ENCODE measurements at regions of chr17 and their contacts with region 1.

Region 1: GRCh38 chr17:14300575-14301278 is at the start of gene HS3ST3B1:
- DNase-seq: peak; percentile 100
- H3K4me3 Mint-ChIP-seq: peak within 1 kb of the TSS; percentile 89
- H3K27ac Mint-ChIP-seq: peak within 1 kb of the TSS; percentile 95
- H3K4me1 Mint-ChIP-seq: peaks cover 38% of the 10 kb centered on the region
- H3K27me3 Mint-ChIP-seq: peaks cover 30% of the 10 kb centered on the region
- total RNA-seq, gene HS3ST3B1: 23.2 to 26.0 TPM

Region 2: GRCh38 chr17:13031718-13032350 is 1268.9 kb before region 1 on chr17:
- CTCF ChIA-PET with region 1: no interaction called
- intact Hi-C with region 1: loop called (anchors 5 kb)
- DNase-seq: peak; percentile 63
- H3K4me3 Mint-ChIP-seq: no peak overlapping the region
- H3K27ac Mint-ChIP-seq: no peak overlapping the region
- H3K4me1 Mint-ChIP-seq: peaks cover 11% of the 10 kb centered on the region
- H3K27me3 Mint-ChIP-seq: no peaks in the 10 kb centered on the region

Region 3: DNA sequence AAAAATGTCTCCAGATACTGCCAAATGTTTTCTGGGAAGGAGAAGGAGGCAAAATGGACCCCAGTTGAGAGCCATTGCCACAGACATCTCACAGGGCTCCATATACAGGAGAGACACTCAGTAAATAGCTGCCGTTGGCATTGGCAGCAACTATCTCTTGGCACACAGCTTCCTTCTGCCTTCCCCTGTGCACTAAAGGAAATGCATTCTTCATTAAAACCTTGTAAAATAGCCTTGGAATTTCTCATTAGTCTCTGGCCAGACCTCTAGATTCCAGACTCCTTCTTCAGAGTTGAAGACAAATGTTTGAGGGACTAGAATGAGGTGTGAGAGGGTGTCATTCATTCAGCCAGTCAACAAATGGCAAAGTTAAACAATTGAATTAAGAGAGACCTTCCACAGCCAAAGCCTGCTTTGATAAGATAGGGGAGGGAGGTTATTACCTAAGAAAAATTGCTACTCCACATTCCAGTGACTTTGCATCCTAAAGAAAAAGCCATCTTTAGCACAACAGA is 475.1 kb before region 1 on chr17:
- CTCF ChIA-PET with region 1: no interaction called
- intact Hi-C with region 1: loop called (anchors 5 kb)
- DNase-seq: no peak
- H3K4me3 Mint-ChIP-seq: no peak overlapping the region
- H3K27ac Mint-ChIP-seq: no peak overlapping the region
- H3K4me1 Mint-ChIP-seq: peaks cover 4% of the 10 kb centered on the region
- H3K27me3 Mint-ChIP-seq: no peaks in the 10 kb centered on the region

Region 4: GRCh38 chr17:14069251-14070021 is 231.3 kb before region 1 on chr17 and contains the start of gene COX10:
- CTCF ChIA-PET with region 1: no interaction called
- intact Hi-C with region 1: loop called (anchors 1 kb)
- DNase-seq: peak; percentile 88
- H3K4me3 Mint-ChIP-seq: peak within 1 kb of the TSS; percentile 94
- H3K27ac Mint-ChIP-seq: peak within 1 kb of the TSS; percentile 87
- H3K4me1 Mint-ChIP-seq: peaks cover 67% of the 10 kb centered on the region
- H3K27me3 Mint-ChIP-seq: no peaks in the 10 kb centered on the region
- total RNA-seq, gene COX10: 29.9 to 30.6 TPM

Region 5: DNA sequence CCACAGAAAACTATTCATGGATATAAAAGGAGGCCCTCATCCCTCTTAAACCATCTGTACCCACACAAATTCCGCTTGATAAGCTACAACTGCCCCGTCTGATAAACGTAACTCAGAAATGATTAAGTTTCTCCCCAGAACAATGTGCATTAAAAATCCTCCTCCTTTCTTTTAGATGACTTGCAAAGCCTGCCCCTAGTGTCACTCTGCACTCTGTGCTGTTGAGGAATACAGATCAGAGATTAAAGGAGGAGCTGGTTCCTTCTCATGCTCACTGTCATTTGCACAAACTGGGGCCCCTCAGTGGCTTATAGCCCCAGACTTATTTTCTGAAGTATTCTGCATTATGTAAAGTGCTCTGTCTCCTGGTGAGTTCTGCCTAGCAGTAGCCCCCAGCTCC is 97.3 kb before region 1 on chr17:
- CTCF ChIA-PET with region 1: interaction called, 9 read pairs
- intact Hi-C with region 1: loop called (anchors 1 kb)
- DNase-seq: peak; percentile 67
- H3K4me3 Mint-ChIP-seq: no peak overlapping the region
- H3K27ac Mint-ChIP-seq: peak overlapping the region; percentile 94
- H3K4me1 Mint-ChIP-seq: peaks cover 85% of the 10 kb centered on the region
- H3K27me3 Mint-ChIP-seq: no peaks in the 10 kb centered on the region

Region 6: DNA sequence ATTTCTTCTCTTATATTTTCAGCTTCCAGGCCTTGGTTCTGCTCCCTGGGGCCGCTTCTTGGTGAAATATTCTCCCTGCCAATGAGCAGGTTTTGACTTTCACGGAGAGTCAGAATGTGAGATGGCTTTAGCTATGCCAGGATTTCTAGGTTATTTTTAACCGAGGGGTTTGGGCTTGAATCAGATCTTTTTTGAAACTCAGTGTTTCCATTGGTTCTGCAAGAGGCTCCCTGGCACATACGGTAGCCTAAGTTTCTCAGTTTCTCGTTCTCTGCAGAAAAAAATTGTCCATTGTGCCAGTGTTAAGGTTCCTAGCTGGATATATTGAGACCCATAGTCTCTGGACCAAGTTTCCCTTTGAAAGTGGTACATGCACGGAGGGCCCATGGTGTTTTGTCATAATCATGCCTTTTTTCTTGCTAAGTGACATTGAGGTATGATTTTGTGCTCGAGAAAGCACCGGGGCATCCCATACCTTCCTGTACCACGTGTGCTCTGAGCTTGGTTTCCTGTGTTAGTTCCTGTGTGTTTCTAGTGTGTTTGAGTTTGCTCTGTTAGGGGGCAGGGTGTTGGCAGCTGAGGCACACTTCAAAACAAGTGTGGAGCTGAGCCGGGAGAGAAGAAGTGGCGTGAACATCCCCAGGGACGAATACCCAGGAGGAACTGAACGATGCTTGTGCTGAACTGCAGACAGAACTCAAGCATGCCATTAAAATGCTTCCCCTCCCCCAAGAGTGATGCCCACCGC is 127.3 kb after region 1 on chr17:
- CTCF ChIA-PET with region 1: interaction called, 4 read pairs
- intact Hi-C with region 1: loop called (anchors 1 kb)
- DNase-seq: peak; percentile 78
- H3K4me3 Mint-ChIP-seq: peak overlapping the region; percentile 56
- H3K27ac Mint-ChIP-seq: peak overlapping the region; percentile 78
- H3K4me1 Mint-ChIP-seq: peaks cover 60% of the 10 kb centered on the region
- H3K27me3 Mint-ChIP-seq: no peaks in the 10 kb centered on the region

Region 7: GRCh38 chr17:14926526-14927122 is 625.9 kb after region 1 on chr17:
- CTCF ChIA-PET with region 1: interaction called, 4 read pairs
- intact Hi-C with region 1: loop called (anchors 2 kb)
- DNase-seq: peak; percentile 72
- H3K4me3 Mint-ChIP-seq: no peak overlapping the region
- H3K27ac Mint-ChIP-seq: no peak overlapping the region
- H3K4me1 Mint-ChIP-seq: no peaks in the 10 kb centered on the region
- H3K27me3 Mint-ChIP-seq: peaks cover 10% of the 10 kb centered on the region

Measured in activated naive CD4-positive, alpha-beta T cell treated with anti-CD3 and anti-CD28 coated beads for 36 hours (primary cell).